Ovary (tissue), 10 donors: ENCODE measurements at regions of chr5 and their contacts with region 1.

Region 1: GRCh38 chr5:136080483-136081216 is 51.9 kb downstream of the TGFBI start:
- DNase-seq: peak; percentile 82 to 93 (median 84)
- H3K4me3 ChIP-seq: peak overlapping the region; percentile 29
- H3K27ac ChIP-seq: peak overlapping the region; percentile 63 to 69
- H3K4me1 ChIP-seq: no peaks in the 10 kb centered on the region
- H3K27me3 ChIP-seq: no peaks in the 10 kb centered on the region
- CTCF ChIP-seq: no peak
- EP300 ChIP-seq: no peak
- POLR2A ChIP-seq: peak; percentile 85

Region 2: GRCh38 chr5:135887351-135887864 is 193.2 kb before region 1 on chr5:
- intact Hi-C with region 1: loop called in 1 of 4 experiments (anchors 5 kb)
- DNase-seq: peak; percentile 44 to 57 (median 52)
- H3K4me3 ChIP-seq: no peak overlapping the region
- H3K27ac ChIP-seq: no peak overlapping the region
- H3K4me1 ChIP-seq: peaks cover 9% of the 10 kb centered on the region
- H3K27me3 ChIP-seq: no peaks in the 10 kb centered on the region
- CTCF ChIP-seq: peak; percentile 60 to 69 (median 65)
- EP300 ChIP-seq: no peak
- POLR2A ChIP-seq: no peak

Region 3: DNA sequence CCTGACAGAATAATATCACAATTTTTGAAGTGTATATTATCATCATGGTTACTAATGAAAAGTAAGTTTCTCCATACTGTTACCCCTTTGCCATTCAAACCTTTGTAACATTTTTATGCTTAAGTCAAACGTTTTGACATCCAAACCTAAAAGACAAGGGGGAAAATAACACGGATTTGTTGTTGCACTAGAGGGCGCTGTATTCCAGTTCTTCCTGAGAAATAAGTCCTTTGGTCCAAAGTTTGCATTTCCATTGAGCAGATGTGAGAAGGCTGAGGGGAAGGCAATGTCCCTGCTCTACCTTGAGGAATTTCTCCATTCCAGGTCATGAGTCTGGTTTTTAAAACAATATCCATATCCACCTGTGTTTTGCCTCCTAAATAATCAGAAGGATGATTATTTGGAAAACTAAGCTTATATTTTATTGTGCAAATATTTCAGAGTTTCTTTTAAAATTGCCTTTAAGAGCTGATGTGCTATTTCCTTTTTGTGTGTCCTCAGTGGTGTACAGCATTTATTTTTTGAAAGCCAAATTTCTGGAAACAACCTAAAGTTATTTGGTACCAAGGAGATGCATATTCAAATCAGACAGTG is 135.6 kb before region 1 on chr5:
- intact Hi-C with region 1: loop called in 3 of 4 experiments (anchors 5 to 10 kb)
- DNase-seq: peak in 3 of 5 donors; percentile 25 to 65 (median 31)
- H3K4me3 ChIP-seq: no peak overlapping the region
- H3K27ac ChIP-seq: no peak overlapping the region
- H3K4me1 ChIP-seq: no peaks in the 10 kb centered on the region
- H3K27me3 ChIP-seq: no peaks in the 10 kb centered on the region
- CTCF ChIP-seq: peak; percentile 41 to 73 (median 51)
- EP300 ChIP-seq: no peak
- POLR2A ChIP-seq: no peak

Region 4: GRCh38 chr5:136132557-136133221 is 52.0 kb after region 1 on chr5 and contains the start of gene SMAD5:
- intact Hi-C with region 1: loop called in 1 of 4 experiments (anchors 10 kb)
- DNase-seq: peak; percentile 96 to 98 (median 97)
- H3K4me3 ChIP-seq: peak within 1 kb of the TSS; percentile 75
- H3K27ac ChIP-seq: peak within 1 kb of the TSS; percentile 89 to 91
- H3K4me1 ChIP-seq: peaks cover 4% of the 10 kb centered on the region
- H3K27me3 ChIP-seq: no peaks in the 10 kb centered on the region
- CTCF ChIP-seq: peak in 2 of 3 donors; percentile 19 to 20
- EP300 ChIP-seq: peak; percentile 47
- POLR2A ChIP-seq: peak; percentile 91
- total RNA-seq, gene SMAD5: 41.8 to 130 (median 112) TPM

Region 5: DNA sequence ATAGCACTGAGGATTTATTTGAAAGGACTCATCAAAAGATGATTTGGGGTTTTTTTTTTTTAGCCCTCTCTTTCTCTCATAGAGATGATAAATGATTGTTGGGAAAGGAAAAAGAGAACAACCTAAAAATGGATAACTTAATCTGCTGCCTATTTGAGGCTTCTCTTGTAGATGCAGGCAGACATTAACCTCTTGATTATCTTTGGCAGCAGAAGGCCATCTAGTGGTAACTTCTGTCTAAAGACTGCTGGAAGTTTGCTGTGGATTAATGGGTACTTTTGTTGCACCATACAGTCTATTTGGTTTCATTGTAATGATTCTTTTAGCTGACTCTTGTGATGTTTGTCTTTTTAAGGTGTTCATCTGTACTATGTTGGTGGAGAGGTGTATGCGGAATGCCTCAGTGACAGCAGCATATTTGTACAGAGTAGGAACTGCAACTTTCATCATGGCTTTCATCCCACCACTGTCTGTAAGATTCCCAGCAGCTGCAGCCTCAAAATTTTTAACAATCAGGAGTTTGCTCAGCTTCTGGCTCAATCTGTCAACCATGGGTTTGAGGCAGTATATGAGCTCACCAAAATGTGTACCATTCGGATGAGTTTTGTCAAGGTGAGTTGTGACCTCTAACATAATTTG is 93.5 kb after region 1 on chr5:
- intact Hi-C with region 1: loop called in 1 of 4 experiments (anchors 10 kb)
- DNase-seq: no peak
- H3K4me3 ChIP-seq: no peak overlapping the region
- H3K27ac ChIP-seq: no peak overlapping the region
- H3K4me1 ChIP-seq: no peaks in the 10 kb centered on the region
- H3K27me3 ChIP-seq: no peaks in the 10 kb centered on the region
- CTCF ChIP-seq: peak in 2 of 3 donors; percentile 14 to 26
- EP300 ChIP-seq: no peak
- POLR2A ChIP-seq: no peak